ENCODE measurements at regions of chr18 and their contacts with region 1.

Region 1: DNA sequence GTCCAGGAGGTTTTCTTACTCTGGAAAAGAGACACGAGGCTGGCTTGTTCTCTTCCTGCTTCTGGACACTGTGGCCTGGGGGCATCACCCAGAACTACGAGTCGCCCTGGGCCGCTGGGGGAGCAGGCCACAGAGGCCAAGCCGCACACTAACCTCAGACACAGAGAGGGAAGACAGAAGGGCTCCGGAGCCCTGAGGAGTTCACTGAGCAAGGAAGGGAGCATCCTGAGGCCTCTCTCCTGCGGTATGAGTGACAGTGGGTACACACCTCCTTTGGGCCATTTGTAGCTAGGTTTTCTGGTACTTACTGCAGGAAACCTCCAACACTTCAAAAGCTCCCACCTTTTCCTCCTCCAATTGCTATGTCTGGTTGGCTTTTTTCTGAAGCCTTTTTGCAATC is 494.1 kb downstream of the DLGAP1 start:
- DNase-seq: no peak
- ATAC-seq: no peak; the same call in 1 of the 3 replicates
- H3K4me3 ChIP-seq: no peak overlapping the region
- H3K27ac ChIP-seq: no peak overlapping the region
- H3K4me1 ChIP-seq: no peaks in the 10 kb centered on the region
- H3K27me3 ChIP-seq: no peaks in the 10 kb centered on the region
- CTCF ChIP-seq: no peak
- EP300 ChIP-seq: no peak
- POLR2A ChIP-seq: no peak
- RAD21 ChIP-seq: no peak

Region 2: GRCh38 chr18:3923750-3924149 is 37.2 kb before region 1 on chr18:
- CTCF ChIA-PET with region 1: no interaction called
- POLR2A ChIA-PET with region 1: no interaction called
- RAD21 ChIA-PET with region 1: no interaction called
- SMC1A ChIA-PET with region 1: no interaction called
- in situ Hi-C with region 1: no loop called
- intact Hi-C with region 1: loop called (anchors 5 kb)
- DNase-seq: no peak
- ATAC-seq: peak; percentile 40
- H3K4me3 ChIP-seq: no peak overlapping the region
- H3K27ac ChIP-seq: no peak overlapping the region
- H3K4me1 ChIP-seq: no peaks in the 10 kb centered on the region
- H3K27me3 ChIP-seq: no peaks in the 10 kb centered on the region
- CTCF ChIP-seq: no peak
- EP300 ChIP-seq: no peak
- POLR2A ChIP-seq: no peak
- RAD21 ChIP-seq: no peak

Measured in GM12878 (cell line).